Endothelial cell of umbilical vein (primary cell): ENCODE measurements at regions of chr15 and their contacts with region 1.

Region 1: GRCh38 chr15:51846463-51847230 is 17.2 kb downstream of the TMOD3 start:
- DNase-seq: peak; percentile 97
- H3K4me3 ChIP-seq: peak overlapping the region in 1 of 3 experiments; percentile 24
- H3K27ac ChIP-seq: peak overlapping the region; percentile 93
- H3K4me1 ChIP-seq: peaks cover 71% of the 10 kb centered on the region
- H3K27me3 ChIP-seq: no peaks in the 10 kb centered on the region
- CTCF ChIP-seq: no peak
- POLR2A ChIP-seq: no peak

Region 2: GRCh38 chr15:51708013-51708412 is 138.6 kb before region 1 on chr15:
- CTCF ChIA-PET with region 1: no interaction called
- POLR2A ChIA-PET with region 1: no interaction called
- dilution Hi-C with region 1: no loop called
- intact Hi-C with region 1: no loop called
- DNase-seq: no peak
- H3K4me3 ChIP-seq: no peak overlapping the region
- H3K27ac ChIP-seq: no peak overlapping the region
- H3K4me1 ChIP-seq: no peaks in the 10 kb centered on the region
- H3K27me3 ChIP-seq: peaks cover 9 to 14% of the 10 kb centered on the region in 2 experiments
- CTCF ChIP-seq: no peak
- POLR2A ChIP-seq: no peak

Region 3: GRCh38 chr15:51829360-51830275 is 17.0 kb before region 1 on chr15 and contains the start of gene TMOD3:
- CTCF ChIA-PET with region 1: interaction called, 5 read pairs
- POLR2A ChIA-PET with region 1: no interaction called
- dilution Hi-C with region 1: no loop called
- intact Hi-C with region 1: loop called (anchors 1 kb)
- DNase-seq: peak; percentile 94
- H3K4me3 ChIP-seq: peak within 1 kb of the TSS; percentile 88 to 97 (median 90)
- H3K27ac ChIP-seq: peak within 1 kb of the TSS; percentile 88
- H3K4me1 ChIP-seq: peaks cover 12% of the 10 kb centered on the region
- H3K27me3 ChIP-seq: no peaks in the 10 kb centered on the region
- CTCF ChIP-seq: peak in 1 of 2 donors; percentile 1
- POLR2A ChIP-seq: peak; percentile 91
- total RNA-seq, gene TMOD3: 63.7 and 64.3 TPM in 2 replicates

Region 4: DNA sequence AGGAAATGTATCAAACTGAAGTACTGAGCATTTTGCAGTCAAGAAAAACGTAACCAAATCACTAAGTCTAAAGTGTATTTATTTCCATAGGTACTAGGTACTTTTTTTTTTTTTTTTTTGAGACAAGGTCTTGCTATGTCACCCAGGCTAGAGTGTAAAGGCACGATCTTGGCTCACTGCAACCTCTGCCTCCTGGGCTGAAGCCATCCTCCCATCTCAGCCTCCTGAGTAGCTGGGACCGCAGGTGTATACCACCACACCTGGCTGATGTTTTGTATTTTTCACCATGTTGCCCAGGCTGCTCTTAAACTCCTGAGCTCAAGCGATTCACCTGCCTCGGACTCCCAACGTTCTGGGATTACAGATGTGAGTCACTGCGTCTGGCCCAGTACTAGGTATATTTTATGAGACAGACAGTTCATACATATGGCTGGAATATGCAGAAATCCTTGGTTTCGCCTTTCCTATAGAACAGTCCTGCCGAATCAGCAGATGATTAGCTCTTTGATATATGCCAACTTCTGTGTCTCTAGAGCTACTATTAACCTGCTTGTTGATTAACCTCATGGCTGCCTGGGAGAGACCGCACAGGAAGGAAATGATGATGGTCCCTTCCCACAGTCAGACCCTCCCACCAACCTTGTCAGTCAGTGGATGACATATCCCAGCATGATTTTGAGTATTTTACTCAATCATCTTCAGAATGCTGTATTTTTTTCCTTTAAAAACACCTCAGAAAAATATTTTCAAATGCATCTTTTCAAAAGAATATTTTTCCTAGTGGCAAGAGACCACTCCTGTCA is 15.1 kb after region 1 on chr15:
- CTCF ChIA-PET with region 1: interaction called, 5 read pairs
- POLR2A ChIA-PET with region 1: no interaction called
- dilution Hi-C with region 1: no loop called
- intact Hi-C with region 1: loop called (anchors 2 kb)
- DNase-seq: peak; percentile 67
- H3K4me3 ChIP-seq: no peak overlapping the region
- H3K27ac ChIP-seq: peak overlapping the region; percentile 55
- H3K4me1 ChIP-seq: peaks cover 9% of the 10 kb centered on the region
- H3K27me3 ChIP-seq: no peaks in the 10 kb centered on the region
- CTCF ChIP-seq: no peak
- POLR2A ChIP-seq: no peak